ENCODE measurements at regions of chr15 and their contacts with region 1.

Region 1: DNA sequence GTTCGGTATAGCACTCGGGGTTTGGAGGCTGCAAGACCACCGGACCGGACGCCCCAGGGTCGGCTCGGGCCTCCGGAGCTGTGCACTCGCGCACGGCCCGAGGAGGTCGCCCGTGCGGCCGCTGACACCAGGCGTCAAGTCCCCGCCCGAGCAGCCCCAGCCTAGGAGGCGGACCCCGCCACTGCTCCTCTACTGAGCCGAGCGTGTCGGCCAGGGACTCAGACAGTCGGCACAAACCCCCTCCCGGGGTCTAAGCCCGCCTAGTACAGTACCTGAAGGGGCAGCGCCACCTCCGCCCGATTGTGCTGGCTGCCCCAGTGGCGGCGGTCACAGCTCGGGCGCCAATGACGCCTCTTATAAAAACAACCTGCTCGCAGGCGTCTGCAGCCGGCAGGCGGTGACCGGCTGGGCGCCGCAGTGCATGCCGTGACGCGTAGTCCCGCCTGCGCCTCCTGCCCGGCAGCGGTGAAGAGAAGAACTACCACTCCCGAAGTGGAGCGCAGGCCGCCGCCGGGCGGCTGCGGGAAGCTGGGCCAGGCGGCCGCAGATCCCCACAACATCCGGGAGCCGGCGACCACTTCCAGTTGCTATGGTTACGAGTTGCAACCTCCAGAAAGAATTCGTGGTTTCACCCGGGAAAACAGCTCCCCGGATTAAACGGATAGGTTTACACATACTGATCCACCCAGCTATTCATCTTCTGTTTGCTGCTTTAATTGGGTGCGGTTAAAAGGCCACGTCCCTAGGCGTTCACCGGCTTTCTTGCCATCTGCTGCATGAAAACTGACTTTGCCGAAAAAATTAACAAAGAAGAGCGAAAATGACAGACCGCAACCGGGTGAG is at the starts of genes CCPG1 and PIERCE2:
- DNase-seq: peak; percentile 85
- ATAC-seq: peak; percentile 93
- H3K4me3 Mint-ChIP-seq: peak within 1 kb of the TSS; percentile 88
- H3K27ac Mint-ChIP-seq: peak within 1 kb of the TSS; percentile 88
- H3K4me1 Mint-ChIP-seq: peaks cover 27% of the 10 kb centered on the region
- H3K27me3 Mint-ChIP-seq: no peaks in the 10 kb centered on the region
- CTCF ChIP-seq: peak; percentile 46
- total RNA-seq, gene CCPG1: 11.9 and 16.2 TPM in 2 replicates
- total RNA-seq, gene PIERCE2: 0.55 and 1.1 TPM in 2 replicates

Region 2: DNA sequence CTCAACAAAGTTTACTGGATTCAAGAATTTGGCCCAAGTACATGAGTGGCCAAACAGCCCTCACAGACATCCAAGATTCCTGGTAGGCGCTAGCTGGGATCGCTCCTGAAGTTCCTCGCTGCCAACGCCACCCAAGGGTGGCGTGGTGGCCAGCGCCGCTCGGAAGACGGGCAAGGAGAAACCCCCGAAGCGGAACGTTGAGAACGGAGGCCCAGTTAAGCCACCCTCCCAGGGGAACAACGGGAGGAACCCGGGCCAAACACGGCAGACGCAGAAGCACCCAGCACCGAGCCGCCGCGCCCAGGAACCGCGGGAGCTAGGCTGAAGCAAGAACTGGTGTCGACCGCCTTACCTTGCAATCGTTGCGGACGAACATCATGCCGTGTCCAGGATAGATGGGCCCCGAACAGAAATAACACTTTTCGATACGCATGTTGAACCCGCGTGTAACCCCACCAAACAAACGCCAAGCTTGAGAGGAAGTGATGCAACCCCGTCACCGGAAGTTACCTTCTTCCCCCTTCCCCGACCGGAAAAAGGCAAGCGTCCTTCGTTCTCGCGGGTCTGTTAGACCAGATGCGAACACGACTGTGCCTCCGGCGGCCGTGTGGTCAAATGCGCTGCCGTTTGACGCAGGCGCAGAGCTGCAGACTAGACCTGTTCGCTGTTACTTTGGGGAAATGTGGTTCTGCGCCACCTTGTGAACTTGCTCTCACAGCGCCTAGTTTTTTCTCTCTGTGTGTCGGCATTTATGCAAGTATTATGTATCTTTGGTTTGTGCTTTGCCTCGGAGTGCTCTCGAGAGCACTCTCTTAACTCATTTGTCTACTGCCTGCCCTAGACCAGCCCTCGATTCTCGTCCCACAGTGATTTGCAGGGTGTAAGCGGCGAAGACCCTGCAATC is 211.5 kb before region 1 on chr15 and contains the start of gene RSL24D1:
- CTCF ChIA-PET with region 1: interaction called, 3 read pairs
- POLR2A ChIA-PET with region 1: interaction called, 20 read pairs
- intact Hi-C with region 1: loop called (anchors 1 kb)
- DNase-seq: peak; percentile 84
- ATAC-seq: peak; percentile 95
- H3K4me3 Mint-ChIP-seq: no peak within 1 kb of the TSS
- H3K27ac Mint-ChIP-seq: no peak within 1 kb of the TSS
- H3K4me1 Mint-ChIP-seq: peaks cover 9% of the 10 kb centered on the region
- H3K27me3 Mint-ChIP-seq: no peaks in the 10 kb centered on the region
- CTCF ChIP-seq: no peak
- total RNA-seq, gene RSL24D1: 90.0 and 99.5 TPM in 2 replicates

Region 3: GRCh38 chr15:55318588-55319494 is 89.3 kb before region 1 on chr15 and contains the starts of genes PIGB and PIGBOS1:
- CTCF ChIA-PET with region 1: interaction called, 5 read pairs
- POLR2A ChIA-PET with region 1: interaction called, 34 read pairs
- intact Hi-C with region 1: loop called (anchors 1 kb)
- DNase-seq: peak; percentile 75
- ATAC-seq: peak; percentile 86
- H3K4me3 Mint-ChIP-seq: peak within 1 kb of the TSS; percentile 99
- H3K27ac Mint-ChIP-seq: peak within 1 kb of the TSS; percentile 99
- H3K4me1 Mint-ChIP-seq: peaks cover 68% of the 10 kb centered on the region
- H3K27me3 Mint-ChIP-seq: no peaks in the 10 kb centered on the region
- CTCF ChIP-seq: no peak
- total RNA-seq, gene PIGB: 29.8 and 31.2 TPM in 2 replicates
- total RNA-seq, gene PIGBOS1: 10.7 and 12.6 TPM in 2 replicates

Region 4: DNA sequence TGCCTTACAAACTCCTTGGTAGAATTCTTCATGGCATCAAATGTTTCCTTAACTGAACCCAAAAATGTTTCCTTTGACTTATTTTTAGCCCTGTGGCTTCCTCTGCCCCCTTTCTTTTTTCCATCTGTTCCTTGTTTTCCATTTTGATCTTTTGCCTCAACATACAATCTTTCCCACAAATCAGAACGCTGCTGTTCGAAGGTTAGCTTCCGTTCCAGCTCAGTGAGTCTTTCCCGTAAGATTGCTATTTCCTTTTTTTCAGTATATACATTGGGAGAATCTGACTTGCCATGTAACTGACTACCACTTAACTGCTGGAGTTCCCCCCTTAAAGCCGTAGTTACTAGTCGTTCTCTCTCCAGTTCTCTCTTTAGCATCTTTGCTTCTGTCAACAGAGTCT is 47.9 kb before region 1 on chr15:
- CTCF ChIA-PET with region 1: no interaction called
- POLR2A ChIA-PET with region 1: no interaction called
- intact Hi-C with region 1: loop called (anchors 2 kb)
- DNase-seq: no peak
- ATAC-seq: no peak
- H3K4me3 Mint-ChIP-seq: no peak overlapping the region
- H3K27ac Mint-ChIP-seq: peak overlapping the region; percentile 36
- H3K4me1 Mint-ChIP-seq: no peaks in the 10 kb centered on the region
- H3K27me3 Mint-ChIP-seq: no peaks in the 10 kb centered on the region
- CTCF ChIP-seq: no peak

Region 5: GRCh38 chr15:55389276-55389631 is 18.9 kb before region 1 on chr15:
- CTCF ChIA-PET with region 1: no interaction called
- POLR2A ChIA-PET with region 1: no interaction called
- intact Hi-C with region 1: no loop called
- DNase-seq: no peak
- ATAC-seq: no peak
- H3K4me3 Mint-ChIP-seq: no peak overlapping the region
- H3K27ac Mint-ChIP-seq: no peak overlapping the region
- H3K4me1 Mint-ChIP-seq: no peaks in the 10 kb centered on the region
- H3K27me3 Mint-ChIP-seq: no peaks in the 10 kb centered on the region
- CTCF ChIP-seq: no peak

Region 6: DNA sequence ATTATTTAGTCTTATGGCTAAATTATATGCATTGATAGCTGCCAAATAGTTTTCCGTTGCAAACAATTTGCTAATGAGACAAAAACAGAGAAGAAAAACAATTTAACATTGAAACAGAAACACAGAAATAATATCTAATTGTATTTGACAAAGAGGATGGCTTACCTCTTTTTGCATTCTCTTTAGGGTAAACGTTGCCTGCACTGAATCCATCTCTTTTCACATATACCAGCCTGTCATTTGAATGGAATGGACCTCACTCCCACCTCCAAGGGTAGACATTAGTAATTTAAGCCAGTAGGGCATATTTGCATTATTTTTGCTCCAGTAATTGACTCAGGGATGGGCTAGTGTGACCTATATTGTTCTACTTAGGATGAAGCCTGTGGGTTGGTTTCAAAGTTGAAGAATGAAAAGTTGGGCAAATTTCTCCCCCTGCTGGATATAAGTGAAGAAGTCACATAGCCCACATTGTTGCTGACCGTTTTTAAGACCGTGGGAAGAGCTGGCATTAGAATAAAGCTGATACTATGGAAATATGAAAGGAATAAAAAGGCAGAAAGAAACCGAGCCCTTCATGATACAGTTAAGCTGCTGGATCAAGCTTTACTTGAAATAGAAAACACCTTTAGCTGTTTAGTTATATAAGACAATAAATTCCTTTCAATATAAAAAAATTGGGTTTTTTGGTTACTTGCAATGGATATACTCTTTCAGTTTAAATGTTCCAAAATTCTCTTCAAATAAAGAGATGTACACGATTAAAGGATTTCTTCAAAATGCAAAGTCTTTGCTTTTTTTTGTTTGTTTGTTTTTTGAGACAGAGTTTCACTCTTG is 27.0 kb after region 1 on chr15:
- CTCF ChIA-PET with region 1: interaction called, 15 read pairs
- POLR2A ChIA-PET with region 1: no interaction called
- intact Hi-C with region 1: loop called (anchors 2 kb)
- DNase-seq: no peak
- ATAC-seq: no peak
- H3K4me3 Mint-ChIP-seq: no peak overlapping the region
- H3K27ac Mint-ChIP-seq: no peak overlapping the region
- H3K4me1 Mint-ChIP-seq: no peaks in the 10 kb centered on the region
- H3K27me3 Mint-ChIP-seq: no peaks in the 10 kb centered on the region
- CTCF ChIP-seq: no peak

Region 7: GRCh38 chr15:55494931-55495330 is 86.8 kb after region 1 on chr15:
- CTCF ChIA-PET with region 1: interaction called, 4 read pairs
- POLR2A ChIA-PET with region 1: interaction called, 5 read pairs
- intact Hi-C with region 1: loop called (anchors 2 kb)
- DNase-seq: no peak
- ATAC-seq: peak; percentile 41
- H3K4me3 Mint-ChIP-seq: no peak overlapping the region
- H3K27ac Mint-ChIP-seq: no peak overlapping the region
- H3K4me1 Mint-ChIP-seq: peaks cover 18% of the 10 kb centered on the region
- H3K27me3 Mint-ChIP-seq: no peaks in the 10 kb centered on the region
- CTCF ChIP-seq: no peak

Region 8: GRCh38 chr15:55917881-55918296 is 509.7 kb after region 1 on chr15:
- CTCF ChIA-PET with region 1: no interaction called
- POLR2A ChIA-PET with region 1: no interaction called
- intact Hi-C with region 1: no loop called
- DNase-seq: no peak
- ATAC-seq: no peak
- H3K4me3 Mint-ChIP-seq: no peak overlapping the region
- H3K27ac Mint-ChIP-seq: no peak overlapping the region
- H3K4me1 Mint-ChIP-seq: no peaks in the 10 kb centered on the region
- H3K27me3 Mint-ChIP-seq: no peaks in the 10 kb centered on the region
- CTCF ChIP-seq: no peak

Measured in activated B cell treated with CpG ODN at 0.5 μM for 24 hours (primary cell).